ENCODE measurements at regions of chr17 and their contacts with region 1.

Region 1: GRCh38 chr17:4789901-4790704 is 1.3 kb downstream of the GLTPD2 start:
- DNase-seq: peak; percentile 88
- H3K4me3 ChIP-seq: peak overlapping the region; percentile 10 to 65 (median 25)
- H3K27ac ChIP-seq: peak overlapping the region; percentile 14
- H3K4me1 ChIP-seq: peaks cover 24% of the 10 kb centered on the region
- H3K27me3 ChIP-seq: peaks cover 2 to 6% of the 10 kb centered on the region in 2 experiments
- CTCF ChIP-seq: peak; percentile 77 to 82
- POLR2A ChIP-seq: peak; percentile 88

Region 2: GRCh38 chr17:4691686-4692085 is 98.4 kb before region 1 on chr17:
- CTCF ChIA-PET with region 1: no interaction called
- POLR2A ChIA-PET with region 1: no interaction called
- dilution Hi-C with region 1: no loop called
- intact Hi-C with region 1: no loop called
- DNase-seq: no peak
- H3K4me3 ChIP-seq: no peak overlapping the region
- H3K27ac ChIP-seq: no peak overlapping the region
- H3K4me1 ChIP-seq: no peaks in the 10 kb centered on the region
- H3K27me3 ChIP-seq: no peaks in the 10 kb centered on the region
- CTCF ChIP-seq: no peak
- POLR2A ChIP-seq: no peak

Region 3: DNA sequence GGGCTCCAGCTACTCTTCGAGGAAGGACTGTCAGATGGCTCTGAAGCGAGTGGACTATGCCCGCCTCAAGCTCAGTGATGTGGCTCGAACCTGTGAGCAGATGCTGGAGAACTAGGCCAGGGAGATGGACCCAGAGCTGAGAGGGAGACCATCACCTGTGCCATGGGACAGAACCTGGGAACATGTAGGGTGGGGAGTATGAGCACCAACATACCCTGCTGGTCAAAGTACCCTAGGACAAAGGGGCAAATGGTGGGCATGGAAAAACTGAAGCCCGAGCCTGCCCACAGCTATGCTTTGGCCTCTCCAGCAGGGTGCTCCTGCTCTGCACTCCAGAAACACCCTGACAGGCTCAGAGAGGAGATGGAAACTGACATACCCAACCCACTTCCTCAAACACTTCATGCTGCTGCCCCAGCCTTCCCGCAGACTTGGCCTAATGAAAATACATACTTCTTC is 57.0 kb before region 1 on chr17:
- CTCF ChIA-PET with region 1: interaction called, 15 read pairs
- POLR2A ChIA-PET with region 1: no interaction called
- dilution Hi-C with region 1: no loop called
- intact Hi-C with region 1: loop called (anchors 1 kb)
- DNase-seq: no peak
- H3K4me3 ChIP-seq: no peak overlapping the region
- H3K27ac ChIP-seq: no peak overlapping the region
- H3K4me1 ChIP-seq: peaks cover 8% of the 10 kb centered on the region
- H3K27me3 ChIP-seq: peaks cover under 1 to 1% of the 10 kb centered on the region in 2 experiments
- CTCF ChIP-seq: no peak
- POLR2A ChIP-seq: no peak

Region 4: GRCh38 chr17:4777969-4778761 is 11.9 kb before region 1 on chr17:
- CTCF ChIA-PET with region 1: interaction called, 13 read pairs
- POLR2A ChIA-PET with region 1: interaction called, 3 read pairs
- dilution Hi-C with region 1: no loop called
- intact Hi-C with region 1: no loop called
- DNase-seq: no peak
- H3K4me3 ChIP-seq: no peak overlapping the region
- H3K27ac ChIP-seq: no peak overlapping the region
- H3K4me1 ChIP-seq: no peaks in the 10 kb centered on the region
- H3K27me3 ChIP-seq: peaks cover 7 to 11% of the 10 kb centered on the region in 2 experiments
- CTCF ChIP-seq: no peak
- POLR2A ChIP-seq: no peak

Region 5: GRCh38 chr17:4858882-4859260 is 68.8 kb after region 1 on chr17:
- CTCF ChIA-PET with region 1: interaction called, 14 read pairs
- POLR2A ChIA-PET with region 1: interaction called, 5 read pairs
- dilution Hi-C with region 1: no loop called
- intact Hi-C with region 1: no loop called
- DNase-seq: peak; percentile 69
- H3K4me3 ChIP-seq: peak overlapping the region in 1 of 3 experiments; percentile 48
- H3K27ac ChIP-seq: peak overlapping the region; percentile 79
- H3K4me1 ChIP-seq: peaks cover 47% of the 10 kb centered on the region
- H3K27me3 ChIP-seq: no peaks in the 10 kb centered on the region
- CTCF ChIP-seq: no peak
- POLR2A ChIP-seq: peak; percentile 40

Region 6: DNA sequence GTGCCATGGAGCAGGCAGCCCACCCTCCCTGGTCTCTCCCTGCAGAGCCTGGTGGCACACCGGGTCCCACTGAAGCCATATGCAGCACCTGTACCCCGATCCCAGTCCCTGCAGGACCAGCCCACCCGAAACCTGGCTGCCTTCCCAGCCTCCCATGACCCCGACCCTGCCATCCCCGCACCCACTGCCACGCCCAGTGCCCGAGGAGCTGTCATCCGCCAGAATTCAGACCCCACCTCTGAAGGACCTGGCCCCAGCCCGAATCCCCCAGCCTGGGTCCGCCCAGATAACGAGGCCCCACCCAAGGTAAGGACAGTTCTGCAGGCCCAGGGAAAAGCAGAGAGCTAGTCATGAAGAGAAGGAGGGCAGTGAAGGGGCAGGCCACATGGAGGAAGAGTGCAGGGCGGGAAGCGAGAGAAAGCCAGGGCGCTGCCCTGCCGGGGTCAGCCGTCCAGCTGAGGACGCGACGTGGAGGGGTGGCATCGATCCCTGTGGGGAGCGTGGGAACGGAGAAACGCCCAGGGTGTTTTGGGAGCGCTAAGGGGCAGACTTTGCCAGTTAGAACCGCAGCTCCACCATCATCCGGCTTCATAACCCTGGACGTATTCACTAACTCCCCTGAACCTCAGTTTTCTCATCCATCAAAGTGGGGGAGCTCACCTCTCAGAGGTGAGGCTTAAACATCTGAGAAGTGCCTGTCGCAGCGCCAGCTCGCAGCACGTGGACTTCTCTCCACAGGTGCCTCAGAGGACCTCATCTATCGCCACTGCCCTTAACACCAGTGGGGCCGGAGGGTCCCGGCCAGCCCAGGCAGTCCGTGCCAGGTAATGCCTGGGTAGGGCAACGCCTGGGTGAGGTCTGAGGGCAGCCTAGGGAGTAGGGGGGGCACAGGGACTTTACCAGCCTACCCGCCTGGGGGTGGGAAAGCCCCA is 101.6 kb after region 1 on chr17:
- CTCF ChIA-PET with region 1: interaction called, 18 read pairs
- POLR2A ChIA-PET with region 1: no interaction called
- dilution Hi-C with region 1: no loop called
- intact Hi-C with region 1: loop called (anchors 1 kb)
- DNase-seq: no peak
- H3K4me3 ChIP-seq: no peak overlapping the region
- H3K27ac ChIP-seq: no peak overlapping the region
- H3K4me1 ChIP-seq: no peaks in the 10 kb centered on the region
- H3K27me3 ChIP-seq: no peaks in the 10 kb centered on the region
- CTCF ChIP-seq: no peak
- POLR2A ChIP-seq: no peak

Measured in endothelial cell of umbilical vein (primary cell).